SK-N-SH (cell line): ENCODE measurements at regions of chr2 and their contacts with region 1.

Region 1: DNA sequence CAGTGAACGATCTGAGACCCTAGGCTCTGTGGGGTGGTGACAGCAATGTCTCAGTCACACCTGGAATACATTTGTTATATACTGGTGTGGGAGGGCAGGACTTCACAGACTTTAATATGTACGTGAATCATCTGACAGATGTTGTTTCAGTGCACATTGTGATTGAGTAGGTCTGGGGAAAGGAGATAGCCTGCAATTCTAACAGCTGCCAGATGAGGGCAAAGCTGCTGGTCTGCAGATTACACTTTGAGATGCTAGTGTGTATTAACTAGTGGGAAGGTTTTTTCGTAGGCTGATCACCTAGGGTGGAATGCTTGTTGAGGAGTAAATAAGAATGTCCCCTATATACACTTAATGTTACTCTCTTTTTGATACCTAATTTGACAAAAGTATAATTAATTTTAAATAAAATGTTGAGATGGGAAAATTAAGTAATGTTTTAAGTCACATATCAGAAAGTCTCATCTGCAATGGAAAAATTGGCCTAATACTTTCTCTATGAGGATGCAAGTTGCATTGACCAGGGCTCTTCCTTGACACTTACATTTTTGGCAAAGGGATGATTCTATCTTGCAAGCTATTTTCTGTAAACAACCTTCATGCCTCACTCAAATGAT is 496.9 kb upstream of the HNMT start:
- DNase-seq: peak; percentile 44
- H3K4me3 ChIP-seq: no peak overlapping the region
- H3K27ac ChIP-seq: no peak overlapping the region
- H3K4me1 ChIP-seq: no peaks in the 10 kb centered on the region
- H3K27me3 ChIP-seq: no peaks in the 10 kb centered on the region
- CTCF ChIP-seq: peak; percentile 63
- EP300 ChIP-seq: no peak
- RAD21 ChIP-seq: peak; percentile 71

Region 2: DNA sequence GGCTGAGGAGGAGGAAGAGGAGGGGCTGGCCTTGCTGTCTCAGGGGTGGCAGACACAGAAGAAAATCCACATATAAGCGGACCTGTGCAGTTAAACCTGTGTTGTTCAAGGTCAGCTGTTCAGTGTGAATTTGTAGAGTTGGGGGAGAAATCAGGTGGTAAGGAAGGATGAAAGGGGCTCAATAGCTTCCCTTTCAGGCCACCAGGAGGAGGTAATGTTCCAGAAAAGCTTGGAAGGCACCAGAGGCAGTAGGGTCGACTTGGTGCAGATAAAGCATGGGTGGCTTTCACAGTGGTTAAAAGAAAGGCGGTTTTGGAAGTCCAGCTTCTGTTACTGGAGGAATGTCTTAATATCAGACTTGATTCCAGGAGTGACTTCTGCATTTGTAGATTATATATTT is 534.7 kb before region 1 on chr2:
- CTCF ChIA-PET with region 1: interaction called, 14 read pairs
- POLR2A ChIA-PET with region 1: no interaction called
- DNase-seq: peak; percentile 49
- H3K4me3 ChIP-seq: no peak overlapping the region
- H3K27ac ChIP-seq: no peak overlapping the region
- H3K4me1 ChIP-seq: peaks cover 0 to 2% of the 10 kb centered on the region in 2 experiments; a peak in 2 of 4 replicates
- H3K27me3 ChIP-seq: no peaks in the 10 kb centered on the region
- CTCF ChIP-seq: peak; percentile 63
- EP300 ChIP-seq: no peak
- RAD21 ChIP-seq: peak; percentile 92

Region 3: DNA sequence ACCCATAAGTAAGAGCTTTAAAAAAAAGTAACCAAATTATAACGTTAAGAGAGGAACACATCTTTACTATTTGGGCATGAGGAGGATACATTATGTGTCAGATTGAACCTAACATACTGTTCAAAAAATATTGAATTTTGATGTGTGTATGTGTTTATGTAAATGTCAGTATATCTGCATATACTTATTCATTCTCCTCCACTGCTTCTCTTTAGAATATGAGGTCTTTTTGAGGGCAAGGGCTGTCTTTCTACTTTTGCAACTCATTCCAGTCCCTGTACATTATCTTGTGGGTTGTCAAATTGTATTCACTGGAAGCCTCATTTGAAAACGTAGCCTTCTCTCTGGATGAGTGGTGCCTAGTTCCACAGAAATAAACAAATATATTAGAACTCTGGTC is 12.5 kb before region 1 on chr2:
- CTCF ChIA-PET with region 1: interaction called, 24 read pairs
- POLR2A ChIA-PET with region 1: no interaction called
- DNase-seq: no peak
- H3K4me3 ChIP-seq: no peak overlapping the region
- H3K27ac ChIP-seq: no peak overlapping the region
- H3K4me1 ChIP-seq: no peaks in the 10 kb centered on the region
- H3K27me3 ChIP-seq: no peaks in the 10 kb centered on the region
- CTCF ChIP-seq: no peak
- EP300 ChIP-seq: no peak
- RAD21 ChIP-seq: no peak

Region 4: DNA sequence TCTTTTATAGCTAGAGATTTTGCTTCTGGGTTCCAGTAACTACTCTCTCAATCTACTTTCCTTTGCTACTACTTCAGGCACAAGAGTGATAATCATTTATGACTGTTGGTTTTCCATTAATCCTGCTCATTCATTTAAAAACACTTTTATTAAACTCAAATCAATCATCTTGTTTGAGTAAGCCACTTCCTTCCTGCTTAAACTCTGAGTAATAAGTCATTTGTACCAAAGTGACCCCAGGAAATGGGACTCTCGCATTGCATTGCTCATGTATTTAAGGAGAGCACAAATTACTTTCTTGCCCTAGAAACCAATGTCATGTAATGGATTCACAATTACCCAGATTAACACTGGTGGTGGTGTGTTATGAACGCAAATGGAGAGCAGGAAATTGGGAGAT is 226.2 kb after region 1 on chr2:
- CTCF ChIA-PET with region 1: no interaction called
- POLR2A ChIA-PET with region 1: no interaction called
- DNase-seq: no peak
- H3K4me3 ChIP-seq: no peak overlapping the region
- H3K27ac ChIP-seq: no peak overlapping the region
- H3K4me1 ChIP-seq: no peaks in the 10 kb centered on the region
- H3K27me3 ChIP-seq: no peaks in the 10 kb centered on the region
- CTCF ChIP-seq: no peak
- EP300 ChIP-seq: no peak
- RAD21 ChIP-seq: no peak